ENCODE measurements at regions of chr5 and their contacts with region 1.

Region 1: DNA sequence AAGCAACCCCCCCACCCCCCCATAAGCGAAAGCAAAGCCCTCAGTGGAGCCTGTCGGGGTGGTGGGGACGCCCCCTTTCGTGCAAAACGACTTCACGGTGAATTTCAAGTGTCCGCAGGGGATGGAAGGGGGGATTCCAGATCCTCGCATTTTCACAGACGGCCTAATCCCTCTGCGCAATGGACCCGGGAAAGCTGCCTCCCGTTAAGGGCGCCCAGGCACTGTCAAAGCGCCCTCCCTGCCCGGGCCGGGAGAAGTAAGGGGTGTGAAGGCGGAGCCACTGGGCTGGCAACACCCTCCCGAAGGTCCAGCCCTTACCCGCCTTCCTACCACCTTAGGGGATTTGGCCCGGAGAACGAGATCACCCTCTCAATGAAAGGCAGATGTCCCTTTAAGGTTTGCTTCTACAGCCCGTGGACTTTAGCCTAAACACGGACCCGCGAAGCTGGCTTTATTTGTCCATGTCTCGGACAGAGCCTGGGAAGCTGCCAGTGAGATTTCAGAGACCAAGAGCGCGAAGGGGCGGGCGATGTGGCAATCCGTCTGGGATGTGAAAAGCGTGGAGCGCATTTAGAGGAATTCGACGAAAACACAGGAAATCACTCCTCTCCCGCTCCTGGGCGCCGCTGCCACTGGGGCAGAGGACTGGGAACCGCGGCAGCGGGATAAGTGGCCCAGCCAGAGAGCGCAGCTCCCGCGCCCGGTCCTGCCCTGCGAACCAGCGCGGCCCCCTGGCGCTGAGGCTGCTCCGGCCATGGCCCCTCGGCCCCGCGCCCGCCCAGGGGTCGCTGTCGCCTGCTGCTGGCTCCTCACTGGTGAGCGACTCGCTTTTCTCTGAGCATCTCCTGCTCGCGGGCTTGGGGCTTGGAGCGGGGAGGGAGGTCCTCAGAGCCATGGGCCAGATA is at the starts of genes ITGA1 and PELO:
- DNase-seq: peak; percentile 87
- ATAC-seq: peak; percentile 87
- total RNA-seq, gene ITGA1: 29.9 TPM
- total RNA-seq, gene PELO: 20.5 TPM

Region 2: DNA sequence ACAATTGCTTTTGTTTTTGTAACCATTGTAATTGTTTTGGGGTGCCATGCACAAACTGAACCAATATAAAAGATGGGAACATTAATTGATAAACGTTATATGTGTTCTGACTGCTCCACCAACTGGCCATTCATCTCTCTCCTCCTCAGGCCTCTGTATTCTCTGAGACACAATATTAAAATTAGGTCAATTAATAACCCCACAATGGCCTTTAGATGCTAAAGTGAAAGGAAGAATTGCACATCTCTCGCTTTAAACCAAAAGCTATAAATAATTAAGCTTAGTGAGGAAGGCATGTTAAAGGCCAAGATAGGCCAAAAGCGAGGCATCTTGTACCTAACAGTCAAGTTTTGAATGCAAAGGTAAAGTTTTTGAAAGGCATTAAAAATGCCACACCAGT is 448.6 kb before region 1 on chr5:
- intact Hi-C with region 1: no loop called
- DNase-seq: no peak
- ATAC-seq: no peak

Region 3: GRCh38 chr5:52693280-52693679 is 94.6 kb before region 1 on chr5:
- intact Hi-C with region 1: loop called (anchors 5 kb)
- DNase-seq: peak; percentile 63
- ATAC-seq: no peak

Region 4: DNA sequence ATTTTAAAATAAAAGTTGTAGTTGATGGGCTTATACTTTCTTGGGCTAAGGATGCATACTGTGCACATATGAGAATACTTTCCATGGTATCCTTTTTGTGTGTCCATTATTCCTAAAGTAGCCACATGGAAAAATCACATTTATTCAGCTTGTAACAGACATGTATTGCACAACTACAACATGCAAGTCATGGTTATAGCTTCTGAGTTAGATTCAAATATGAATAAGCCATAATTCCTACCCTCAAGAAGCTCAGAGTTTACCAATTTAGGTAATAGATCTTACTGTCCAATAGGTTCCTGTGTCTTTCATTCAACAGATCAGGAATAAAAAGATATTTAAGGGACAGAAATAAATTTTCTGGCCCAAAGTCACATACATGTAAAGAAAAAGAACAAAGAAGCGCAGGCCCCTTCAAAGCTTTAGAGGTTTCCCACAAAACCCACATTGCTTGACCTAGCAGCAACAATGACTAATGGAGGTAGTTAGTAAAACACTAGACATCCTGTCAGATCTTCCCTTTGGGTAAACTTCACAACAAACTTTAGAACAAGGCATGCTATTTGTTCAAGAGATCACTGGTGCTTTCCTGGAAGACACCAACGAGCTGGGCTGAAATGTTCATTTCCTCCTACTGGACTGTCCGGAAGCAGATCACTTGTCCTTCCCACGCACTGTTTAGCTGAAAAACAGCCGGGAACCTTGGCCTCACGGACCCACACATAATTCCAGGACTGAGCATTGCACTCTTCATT is 78.5 kb before region 1 on chr5:
- intact Hi-C with region 1: loop called (anchors 5 kb)
- DNase-seq: no peak
- ATAC-seq: no peak

Region 5: GRCh38 chr5:52725065-52725746 is 62.6 kb before region 1 on chr5:
- intact Hi-C with region 1: loop called (anchors 5 kb)
- DNase-seq: no peak
- ATAC-seq: no peak

Region 6: GRCh38 chr5:52837068-52837467 is 49.2 kb after region 1 on chr5:
- intact Hi-C with region 1: loop called (anchors 5 kb)
- DNase-seq: no peak
- ATAC-seq: peak; percentile 8

Region 7: DNA sequence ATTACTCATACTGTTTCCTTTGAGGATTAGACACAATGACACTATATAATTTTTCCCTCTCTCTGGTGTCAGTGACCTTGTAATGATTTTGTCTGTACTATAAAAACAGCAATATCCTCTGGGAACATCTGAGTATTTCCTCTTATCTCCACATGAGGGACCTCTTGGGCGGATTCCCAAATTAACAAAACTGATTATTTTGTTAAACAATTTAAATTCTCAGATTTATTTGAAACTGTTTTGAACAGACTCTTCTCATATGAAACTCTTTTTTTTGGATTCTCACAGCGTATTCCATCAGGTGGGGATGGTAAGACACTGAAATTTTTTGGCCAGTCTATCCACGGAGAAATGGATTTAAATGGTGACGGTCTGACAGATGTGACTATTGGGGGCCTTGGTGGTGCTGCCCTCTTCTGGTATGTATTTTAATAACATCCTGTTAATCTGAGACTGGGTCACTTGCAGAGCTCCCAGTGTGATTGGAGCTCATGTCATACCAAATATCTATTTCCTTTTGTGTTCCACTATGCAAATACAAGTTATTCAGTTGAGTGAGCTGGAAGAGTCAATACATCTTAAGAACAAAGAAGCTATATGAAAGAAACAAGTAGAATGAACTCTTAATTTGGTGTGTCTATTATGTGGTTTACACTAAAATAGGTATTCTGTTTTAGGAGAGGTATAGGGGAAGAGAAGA is 127.5 kb after region 1 on chr5:
- intact Hi-C with region 1: loop called (anchors 2 kb)
- DNase-seq: peak; percentile 31
- ATAC-seq: peak; percentile 75

Measured in Right ventricle myocardium inferior (tissue), 1 donor.